Heart right ventricle (tissue), 16 donors: ENCODE measurements at regions of chr7 and their contacts with region 1.

Region 1: GRCh38 chr7:151057989-151058780 is 488 bp upstream of the CDK5 start:
- DNase-seq: peak; percentile 98 to 99
- ATAC-seq: peak; percentile 89 to 93 (median 90)
- H3K4me3 ChIP-seq: peak overlapping the region; percentile 22 to 95 (median 88)
- H3K27ac ChIP-seq: peak overlapping the region; percentile 94 to 98 (median 97)
- H3K4me1 ChIP-seq: peaks cover 33 to 55% (median 50%) of the 10 kb centered on the region in 9 donors
- H3K27me3 ChIP-seq: no peaks in the 10 kb centered on the region
- CTCF ChIP-seq: peak in 1 of 9 donors; percentile 18

Region 2: DNA sequence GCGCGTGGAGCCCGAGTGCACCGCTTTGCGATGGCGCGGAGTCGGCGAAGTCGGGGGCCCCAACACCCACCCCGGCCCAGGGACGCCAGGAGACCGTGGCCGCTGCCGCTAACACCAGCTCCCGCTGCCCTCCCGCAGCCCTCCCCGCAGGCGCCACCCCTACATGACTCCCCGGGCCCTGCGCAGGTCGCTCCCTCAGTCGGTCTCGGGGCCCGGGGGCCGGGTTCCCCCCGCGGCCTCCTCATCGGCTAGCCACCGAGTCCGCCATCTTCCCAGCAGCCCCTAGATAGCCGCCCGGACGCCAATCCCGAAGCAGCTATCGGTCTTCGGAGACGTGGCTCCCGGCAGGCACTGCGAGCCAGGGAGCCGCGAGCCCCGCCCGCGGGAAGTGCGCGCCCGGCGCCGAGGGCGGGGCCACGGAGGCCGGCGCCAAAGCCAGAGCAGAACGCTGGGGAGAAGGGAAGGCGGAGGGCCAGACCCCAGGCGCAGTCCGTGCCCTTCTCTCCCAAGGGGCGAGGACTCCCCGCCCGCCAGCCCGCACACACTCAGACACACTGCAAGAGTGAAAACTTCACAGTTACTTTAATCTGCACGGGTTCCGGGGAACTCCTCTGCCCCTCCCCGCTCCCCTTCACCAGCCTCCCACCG is 22.5 kb after region 1 on chr7 and contains the start of gene FASTK:
- intact Hi-C with region 1: loop called in 6 of 10 experiments (anchors 1 to 2 kb)
- DNase-seq: peak; percentile 90 to 91
- ATAC-seq: peak; percentile 80 to 91 (median 86)
- H3K4me3 ChIP-seq: peak within 1 kb of the TSS; percentile 45 to 98 (median 92)
- H3K27ac ChIP-seq: peak within 1 kb of the TSS; percentile 86 to 98 (median 96)
- H3K4me1 ChIP-seq: peaks cover 37 to 72% (median 62%) of the 10 kb centered on the region in 9 donors
- H3K27me3 ChIP-seq: no peaks in the 10 kb centered on the region
- CTCF ChIP-seq: no peak
- total RNA-seq, gene FASTK: 65.0 to 107 (median 75.6) TPM

Region 3: GRCh38 chr7:151085691-151086620 is 27.8 kb after region 1 on chr7 and contains the start of gene AGAP3:
- intact Hi-C with region 1: loop called in 7 of 10 experiments (anchors 1 to 2 kb)
- DNase-seq: peak; percentile 89 to 91
- ATAC-seq: peak; percentile 59 to 72 (median 66)
- H3K4me3 ChIP-seq: peak within 1 kb of the TSS; percentile 69 to 88 (median 78)
- H3K27ac ChIP-seq: peak within 1 kb of the TSS; percentile 81 to 94 (median 90)
- H3K4me1 ChIP-seq: peaks cover 41 to 72% (median 69%) of the 10 kb centered on the region in 9 donors
- H3K27me3 ChIP-seq: no peaks in the 10 kb centered on the region
- CTCF ChIP-seq: no peak
- total RNA-seq, gene AGAP3: 40.5 to 93.4 (median 50.3) TPM